ENCODE measurements at regions of chr11 and their contacts with region 1.

Region 1: GRCh38 chr11:74929431-74930363 is 19.2 kb downstream of the XRRA1 start:
- DNase-seq: peak; percentile 76
- H3K4me3 Mint-ChIP-seq: no peak overlapping the region
- H3K27ac Mint-ChIP-seq: no peak overlapping the region
- H3K4me1 Mint-ChIP-seq: peaks cover 53% of the 10 kb centered on the region
- H3K27me3 Mint-ChIP-seq: no peaks in the 10 kb centered on the region

Region 2: DNA sequence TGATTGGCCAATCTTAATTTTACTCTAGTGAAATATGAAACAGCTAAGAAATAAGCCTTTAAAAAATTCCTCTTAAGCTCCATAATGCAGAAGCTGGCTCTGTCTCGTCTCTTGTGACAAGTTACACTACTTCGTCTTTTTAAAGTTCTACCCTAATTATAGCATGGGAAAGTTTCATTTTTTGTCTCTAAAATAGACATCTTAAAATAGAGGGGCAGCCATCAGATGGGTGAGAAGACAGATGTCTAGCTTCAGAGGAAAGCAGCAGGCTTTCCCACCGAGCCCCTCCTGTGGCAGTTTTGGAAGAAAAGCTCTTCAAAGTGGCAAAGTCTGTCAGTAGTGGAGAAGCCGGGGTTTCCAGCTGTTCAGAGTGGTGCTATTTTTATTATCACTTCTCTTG is 20.3 kb before region 1 on chr11:
- CTCF ChIA-PET with region 1: no interaction called
- POLR2A ChIA-PET with region 1: no interaction called
- DNase-seq: no peak
- H3K4me3 Mint-ChIP-seq: no peak overlapping the region
- H3K27ac Mint-ChIP-seq: no peak overlapping the region
- H3K4me1 Mint-ChIP-seq: no peaks in the 10 kb centered on the region
- H3K27me3 Mint-ChIP-seq: no peaks in the 10 kb centered on the region

Region 3: DNA sequence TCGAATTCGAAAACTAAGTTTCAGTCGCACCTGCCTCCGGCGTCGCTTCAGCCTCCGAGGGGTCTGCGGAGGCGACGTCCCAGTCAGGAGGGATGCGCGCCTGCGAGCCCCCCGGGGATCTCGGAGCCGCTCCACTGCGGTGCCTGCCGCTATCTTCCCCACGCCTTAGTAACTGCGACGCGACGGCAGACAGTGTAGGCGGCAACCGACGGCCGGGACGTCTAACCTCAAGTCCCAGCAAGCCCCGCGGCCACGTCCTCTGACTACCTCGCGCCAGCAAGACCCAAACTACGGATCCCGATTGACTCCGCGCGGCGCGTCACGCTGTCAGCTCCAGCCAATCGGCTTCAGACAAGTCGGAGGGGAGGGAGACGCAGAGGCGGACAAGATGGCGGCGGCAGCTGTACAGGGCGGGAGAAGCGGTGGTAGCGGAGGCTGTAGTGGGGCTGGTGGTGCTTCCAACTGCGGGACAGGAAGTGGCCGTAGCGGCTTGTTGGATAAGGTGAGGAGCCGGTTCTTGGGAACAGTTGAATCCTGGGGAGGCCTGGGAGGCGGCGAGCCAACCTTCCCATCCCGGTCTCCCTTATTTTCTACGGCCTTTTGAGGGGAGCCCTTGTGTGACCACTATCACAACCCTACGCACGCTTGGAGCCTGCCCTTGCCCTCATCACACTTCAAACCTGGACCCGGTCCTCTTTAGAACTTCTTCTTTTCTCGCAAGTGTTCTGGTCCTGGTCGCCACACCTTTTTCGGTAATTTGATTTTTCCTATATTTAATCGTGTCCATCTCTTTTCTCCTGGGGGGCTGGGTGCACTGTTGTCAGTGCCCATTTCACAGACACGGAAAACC is 19.4 kb after region 1 on chr11 and contains the starts of genes SPCS2 and XRRA1:
- CTCF ChIA-PET with region 1: interaction called, 4 read pairs
- POLR2A ChIA-PET with region 1: interaction called, 16 read pairs
- DNase-seq: peak; percentile 99
- H3K4me3 Mint-ChIP-seq: peak within 1 kb of the TSS; percentile 95
- H3K27ac Mint-ChIP-seq: peak within 1 kb of the TSS; percentile 89
- H3K4me1 Mint-ChIP-seq: peaks cover 43% of the 10 kb centered on the region
- H3K27me3 Mint-ChIP-seq: no peaks in the 10 kb centered on the region
- total RNA-seq, gene SPCS2: 194 to 198 TPM
- total RNA-seq, gene XRRA1: 10.3 to 10.9 TPM

Region 4: GRCh38 chr11:75022759-75023396 is 93.2 kb after region 1 on chr11:
- CTCF ChIA-PET with region 1: interaction called, 16 read pairs
- POLR2A ChIA-PET with region 1: no interaction called
- DNase-seq: peak; percentile 79
- H3K4me3 Mint-ChIP-seq: no peak overlapping the region
- H3K27ac Mint-ChIP-seq: no peak overlapping the region
- H3K4me1 Mint-ChIP-seq: no peaks in the 10 kb centered on the region
- H3K27me3 Mint-ChIP-seq: no peaks in the 10 kb centered on the region

Region 5: DNA sequence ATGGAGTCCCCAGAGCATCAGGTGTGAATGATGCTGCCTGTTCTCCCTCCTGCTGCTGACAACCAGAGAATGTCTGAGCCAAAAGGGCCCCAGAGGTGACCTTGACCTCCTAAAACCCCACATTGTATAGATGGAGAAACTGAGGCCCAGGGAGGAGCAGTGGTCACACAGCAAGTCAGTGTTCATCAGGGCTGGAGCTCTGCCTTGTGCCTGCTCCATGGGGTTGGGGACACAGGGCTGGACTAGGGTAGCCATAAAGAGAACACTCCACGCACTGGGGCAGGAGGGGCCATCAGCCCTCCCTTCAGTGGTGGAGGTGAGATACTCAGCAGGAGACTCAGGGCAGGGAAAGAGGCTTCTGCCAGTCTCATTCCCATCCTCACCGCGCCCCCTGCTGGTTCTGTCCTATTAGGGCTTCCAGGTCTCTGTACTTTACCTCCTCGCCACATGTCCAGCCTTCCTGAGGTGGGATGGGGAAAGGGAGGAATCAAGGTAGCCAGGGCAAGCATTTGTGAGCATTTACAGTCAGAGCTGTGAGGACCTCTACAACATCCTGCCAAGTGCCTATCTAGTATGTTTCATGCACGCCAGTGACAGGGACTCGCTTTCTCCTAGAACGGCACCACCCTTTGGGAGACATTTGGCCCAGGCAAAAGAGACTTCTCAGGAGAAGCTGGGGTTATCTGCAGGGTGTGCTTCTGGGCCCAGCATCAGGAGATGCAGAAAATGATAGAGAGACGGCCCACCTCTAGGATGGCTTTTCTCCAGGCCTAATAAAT is 102.3 kb after region 1 on chr11:
- CTCF ChIA-PET with region 1: interaction called, 31 read pairs
- POLR2A ChIA-PET with region 1: no interaction called
- DNase-seq: peak; percentile 67
- H3K4me3 Mint-ChIP-seq: no peak overlapping the region
- H3K27ac Mint-ChIP-seq: no peak overlapping the region
- H3K4me1 Mint-ChIP-seq: peaks cover 3% of the 10 kb centered on the region
- H3K27me3 Mint-ChIP-seq: no peaks in the 10 kb centered on the region

Region 6: DNA sequence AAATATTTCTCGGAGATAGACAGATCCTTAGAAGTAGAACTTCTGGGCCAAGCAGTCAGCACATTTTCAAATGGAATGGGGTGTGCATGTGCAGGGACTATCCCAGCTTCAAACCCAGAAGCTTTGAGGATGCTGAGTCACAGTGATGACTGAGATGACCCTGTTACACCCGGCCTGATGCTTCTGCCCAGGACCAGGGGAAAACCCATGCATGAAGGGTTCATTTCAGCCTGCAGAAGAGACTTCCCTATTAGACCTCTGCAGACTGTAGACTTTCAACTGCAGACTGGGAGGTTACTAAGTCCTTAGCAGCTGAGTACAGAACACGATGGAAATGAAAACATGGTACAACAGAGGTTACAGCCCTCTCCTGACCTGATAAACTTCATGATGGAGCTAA is 170.6 kb after region 1 on chr11:
- CTCF ChIA-PET with region 1: no interaction called
- POLR2A ChIA-PET with region 1: no interaction called
- DNase-seq: peak; percentile 43
- H3K4me3 Mint-ChIP-seq: no peak overlapping the region
- H3K27ac Mint-ChIP-seq: no peak overlapping the region
- H3K4me1 Mint-ChIP-seq: peaks cover 28% of the 10 kb centered on the region
- H3K27me3 Mint-ChIP-seq: peaks cover 16% of the 10 kb centered on the region

Measured in activated CD4-positive, alpha-beta memory T cell treated with anti-CD3 and anti-CD28 coated beads, Interleukin-2, amount 10 ng/mL, durations not matched to agents 7 days and 5 days (primary cell).